ENCODE measurements at regions of chr3 and their contacts with region 1.

Region 1: GRCh38 chr3:46970391-46971091 is 6.0 kb downstream of the CCDC12 start:
- DNase-seq: peak in 5 of 6 donors; percentile 73 to 88 (median 78)
- ATAC-seq: peak; percentile 78 to 89 (median 87)
- H3K4me3 ChIP-seq: peak overlapping the region in 1 of 4 donors; percentile 4
- H3K27ac ChIP-seq: peak overlapping the region; percentile 28 to 66 (median 54)
- H3K4me1 ChIP-seq: peaks cover 34 to 76% (median 64%) of the 10 kb centered on the region in 3 donors
- H3K27me3 ChIP-seq: no peaks in the 10 kb centered on the region
- CTCF ChIP-seq: no peak

Region 2: GRCh38 chr3:46935168-46935858 is 35.2 kb before region 1 on chr3:
- intact Hi-C with region 1: loop called in 1 of 3 experiments (anchors 5 kb)
- DNase-seq: peak in 5 of 6 donors; percentile 82 to 92 (median 87)
- ATAC-seq: peak; percentile 80 to 85 (median 83)
- H3K4me3 ChIP-seq: no peak overlapping the region
- H3K27ac ChIP-seq: peak overlapping the region; percentile 54 to 72 (median 64)
- H3K4me1 ChIP-seq: peaks cover 87 to 96% (median 91%) of the 10 kb centered on the region in 3 donors
- H3K27me3 ChIP-seq: no peaks in the 10 kb centered on the region
- CTCF ChIP-seq: peak in 2 of 4 donors; percentile 6 to 18